Mammary epithelial cell (primary cell): ENCODE measurements at regions of chr3 and their contacts with region 1.

Region 1: GRCh38 chr3:147616998-147617619 is 207.9 kb downstream of the ZIC1 start:
- DNase-seq: no peak
- H3K4me3 ChIP-seq: no peak overlapping the region
- H3K27ac ChIP-seq: no peak overlapping the region
- H3K4me1 ChIP-seq: no peaks in the 10 kb centered on the region
- H3K27me3 ChIP-seq: no peaks in the 10 kb centered on the region
- CTCF ChIP-seq: peak; percentile 51 to 56

Region 2: GRCh38 chr3:147361454-147362420 is 255.4 kb before region 1 on chr3:
- CTCF ChIA-PET with region 1: no interaction called
- dilution Hi-C with region 1: no loop called
- in situ Hi-C with region 1: no loop called
- intact Hi-C with region 1: loop called (anchors 5 kb)
- DNase-seq: peak; percentile 3
- H3K4me3 ChIP-seq: no peak overlapping the region
- H3K27ac ChIP-seq: no peak overlapping the region
- H3K4me1 ChIP-seq: no peaks in the 10 kb centered on the region
- H3K27me3 ChIP-seq: peaks cover 46% of the 10 kb centered on the region
- CTCF ChIP-seq: peak; percentile 54 to 66

Region 3: DNA sequence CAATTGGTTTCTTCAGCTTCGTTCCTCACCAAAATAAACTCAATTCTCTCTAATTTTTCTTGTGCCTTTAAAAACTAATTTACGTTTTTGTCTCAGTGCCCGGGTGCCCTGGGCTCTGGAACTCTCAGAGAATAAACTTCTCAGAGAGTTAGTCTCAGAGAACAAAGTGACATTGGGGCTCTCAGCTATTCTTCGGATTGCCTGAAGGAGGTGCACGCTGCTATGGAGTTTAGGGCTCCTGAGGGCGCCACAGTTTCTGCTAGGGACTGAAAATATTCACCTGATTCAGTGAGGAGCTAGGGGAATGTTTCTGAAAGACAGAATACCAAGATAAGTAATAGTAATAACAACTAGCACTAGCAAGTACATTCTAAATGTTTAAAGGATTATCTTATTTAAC is 233.5 kb before region 1 on chr3:
- CTCF ChIA-PET with region 1: no interaction called
- dilution Hi-C with region 1: no loop called
- in situ Hi-C with region 1: no loop called
- intact Hi-C with region 1: loop called (anchors 10 kb)
- DNase-seq: no peak
- H3K4me3 ChIP-seq: no peak overlapping the region
- H3K27ac ChIP-seq: no peak overlapping the region
- H3K4me1 ChIP-seq: no peaks in the 10 kb centered on the region
- H3K27me3 ChIP-seq: peaks cover 73% of the 10 kb centered on the region
- CTCF ChIP-seq: peak in 1 of 2 donors; percentile 26